Cardiac septum (tissue), 1 donor: ENCODE measurements at regions of chr6 and their contacts with region 1.

Region 1: DNA sequence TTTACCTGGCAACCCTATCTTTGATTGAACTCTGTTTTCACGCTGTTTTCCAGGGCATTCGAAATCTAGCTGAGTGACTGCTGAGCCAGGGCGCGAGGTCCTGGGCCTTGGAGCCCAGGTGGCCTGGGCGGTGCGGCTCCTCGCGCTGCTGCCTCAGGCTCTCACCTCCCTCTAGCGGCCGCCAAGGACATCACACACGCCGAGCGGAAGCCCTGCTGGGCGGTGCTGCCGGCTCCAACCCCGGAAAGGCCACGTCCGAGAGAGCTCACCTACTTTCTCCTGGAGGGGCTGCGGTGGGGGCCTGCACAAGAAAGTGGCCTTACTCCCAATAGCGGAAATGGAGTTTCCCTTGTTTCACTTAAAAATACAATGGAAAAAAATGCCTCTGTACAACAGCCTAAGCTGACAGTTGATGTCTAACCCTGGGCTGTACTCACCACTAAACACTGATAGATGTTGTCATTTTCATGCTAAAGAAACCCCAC is 77.7 kb downstream of the ELOVL4 start:
- DNase-seq: peak; percentile 91

Region 2: DNA sequence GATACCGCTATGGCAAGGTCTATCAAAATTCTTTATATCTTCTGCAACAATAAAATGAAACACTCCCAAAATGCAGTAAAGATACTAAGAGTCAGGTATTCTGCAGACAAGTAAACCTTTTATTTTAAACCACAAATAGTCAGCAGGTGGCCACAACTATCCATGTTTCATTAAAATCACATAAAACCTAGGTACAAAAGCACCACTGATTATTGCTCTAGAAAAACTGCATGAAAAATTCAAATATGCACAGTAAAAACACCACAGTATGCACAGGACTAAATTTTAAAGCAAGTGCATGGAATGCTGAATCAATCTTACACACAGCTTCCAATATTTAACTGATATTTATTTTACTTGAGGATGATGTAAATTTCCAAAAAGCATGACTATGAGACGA is 668.5 kb before region 1 on chr6:
- intact Hi-C with region 1: no loop called
- DNase-seq: no peak

Region 3: GRCh38 chr6:79777713-79778579 is 91.7 kb before region 1 on chr6:
- intact Hi-C with region 1: loop called (anchors 5 kb)
- DNase-seq: peak; percentile 89